MCF 10A (cell line): ENCODE measurements at regions of chr11 and their contacts with region 1.

Region 1: GRCh38 chr11:123246749-123247495 is 51.9 kb upstream of the CLMP start:
- DNase-seq: peak; percentile 85
- H3K4me3 Mint-ChIP-seq: no peak overlapping the region
- H3K27ac Mint-ChIP-seq: no peak overlapping the region
- H3K4me1 Mint-ChIP-seq: peaks cover 12% of the 10 kb centered on the region
- H3K27me3 Mint-ChIP-seq: no peaks in the 10 kb centered on the region
- CTCF ChIP-seq: peak; percentile 94

Region 2: GRCh38 chr11:123093739-123094138 is 153.2 kb before region 1 on chr11:
- CTCF ChIA-PET with region 1: interaction called, 487 read pairs
- POLR2A ChIA-PET with region 1: interaction called, 3 read pairs
- intact Hi-C with region 1: no loop called
- DNase-seq: no peak
- H3K4me3 Mint-ChIP-seq: no peak overlapping the region
- H3K27ac Mint-ChIP-seq: no peak overlapping the region
- H3K4me1 Mint-ChIP-seq: no peaks in the 10 kb centered on the region
- H3K27me3 Mint-ChIP-seq: no peaks in the 10 kb centered on the region
- CTCF ChIP-seq: no peak

Region 3: DNA sequence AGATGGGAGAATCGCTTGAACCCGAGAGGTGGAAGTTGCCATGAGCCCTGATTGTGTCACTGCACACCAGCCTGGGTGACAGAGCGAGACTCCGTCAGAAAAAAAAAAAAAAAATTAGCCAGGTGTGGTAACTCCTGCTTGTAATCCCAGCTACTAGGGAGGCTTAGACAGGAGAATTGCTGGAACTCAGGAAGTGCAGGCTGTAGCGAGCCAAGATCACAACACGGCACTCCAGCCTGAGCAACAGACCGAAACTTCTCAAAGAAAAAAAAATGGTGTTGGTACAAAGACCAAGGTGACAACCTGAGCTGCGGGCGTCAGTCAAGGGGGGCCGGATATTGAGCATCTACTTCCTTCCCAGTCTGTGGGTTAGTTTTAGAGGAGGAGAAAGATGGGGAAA is 136.6 kb before region 1 on chr11:
- CTCF ChIA-PET with region 1: interaction called, 487 read pairs
- POLR2A ChIA-PET with region 1: interaction called, 25 read pairs
- intact Hi-C with region 1: loop called (anchors 1 kb)
- DNase-seq: no peak
- H3K4me3 Mint-ChIP-seq: no peak overlapping the region
- H3K27ac Mint-ChIP-seq: no peak overlapping the region
- H3K4me1 Mint-ChIP-seq: peaks cover 5% of the 10 kb centered on the region
- H3K27me3 Mint-ChIP-seq: no peaks in the 10 kb centered on the region
- CTCF ChIP-seq: no peak

Region 4: GRCh38 chr11:123145220-123145619 is 101.7 kb before region 1 on chr11:
- CTCF ChIA-PET with region 1: interaction called, 12 read pairs
- POLR2A ChIA-PET with region 1: interaction called, 3 read pairs
- intact Hi-C with region 1: no loop called
- DNase-seq: peak; percentile 99
- H3K4me3 Mint-ChIP-seq: peak overlapping the region; percentile 57
- H3K27ac Mint-ChIP-seq: peak overlapping the region; percentile 72
- H3K4me1 Mint-ChIP-seq: peaks cover 27% of the 10 kb centered on the region
- H3K27me3 Mint-ChIP-seq: no peaks in the 10 kb centered on the region
- CTCF ChIP-seq: no peak

Region 5: GRCh38 chr11:123174196-123175183 is 72.4 kb before region 1 on chr11:
- CTCF ChIA-PET with region 1: interaction called, 28 read pairs
- POLR2A ChIA-PET with region 1: interaction called, 4 read pairs
- intact Hi-C with region 1: no loop called
- DNase-seq: peak; percentile 97
- H3K4me3 Mint-ChIP-seq: peak overlapping the region; percentile 11
- H3K27ac Mint-ChIP-seq: peak overlapping the region; percentile 90
- H3K4me1 Mint-ChIP-seq: peaks cover 48% of the 10 kb centered on the region
- H3K27me3 Mint-ChIP-seq: no peaks in the 10 kb centered on the region
- CTCF ChIP-seq: no peak

Region 6: DNA sequence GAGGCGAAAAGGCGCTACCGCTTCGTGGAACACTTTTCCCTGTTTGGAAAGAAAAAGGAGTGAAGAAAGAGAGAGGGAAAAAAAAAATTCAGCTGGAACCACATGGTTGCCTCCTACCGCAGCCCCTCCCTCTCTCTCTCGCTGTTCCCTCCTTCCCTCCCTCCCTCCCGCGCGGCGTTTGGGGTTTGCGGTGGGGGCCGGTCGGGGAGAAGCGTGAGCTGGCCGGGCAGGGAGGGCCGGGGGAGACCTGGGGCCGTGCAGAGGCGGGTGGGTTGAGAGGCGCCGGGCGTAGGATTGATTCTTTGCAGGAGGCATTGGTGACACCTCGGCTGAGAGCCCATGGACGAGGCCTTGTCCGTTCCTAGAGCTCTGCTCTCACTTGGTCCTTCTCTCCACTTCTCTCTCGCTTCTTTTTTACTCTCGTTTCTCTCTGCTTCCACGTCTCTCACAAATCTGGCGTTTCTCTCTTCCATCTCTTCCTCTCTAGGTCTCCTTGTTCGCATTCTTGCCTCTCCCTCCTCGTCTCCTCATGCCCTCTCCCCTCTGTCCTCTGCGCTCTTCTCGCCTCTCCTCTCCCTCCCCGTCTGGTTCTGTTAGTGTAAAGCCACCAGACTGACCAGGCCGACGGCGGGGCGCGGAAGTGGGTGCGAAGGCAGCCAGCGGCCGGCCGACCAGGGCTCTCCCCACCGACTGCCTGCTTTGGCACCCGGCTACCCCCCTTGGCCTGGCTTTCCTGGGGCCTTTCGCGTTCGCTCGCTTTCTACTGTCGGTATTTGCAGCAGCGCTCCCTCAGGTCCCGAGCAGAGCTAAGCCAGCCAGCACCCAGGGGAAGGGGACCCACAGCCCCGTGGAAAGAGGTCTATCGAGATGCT is 51.5 kb before region 1 on chr11 and contains the start of gene CLMP:
- CTCF ChIA-PET with region 1: interaction called, 16 read pairs
- POLR2A ChIA-PET with region 1: no interaction called
- intact Hi-C with region 1: loop called (anchors 2 kb)
- DNase-seq: peak; percentile 77
- H3K4me3 Mint-ChIP-seq: peak within 1 kb of the TSS; percentile 96
- H3K27ac Mint-ChIP-seq: peak within 1 kb of the TSS; percentile 93
- H3K4me1 Mint-ChIP-seq: peaks cover 53% of the 10 kb centered on the region
- H3K27me3 Mint-ChIP-seq: no peaks in the 10 kb centered on the region
- CTCF ChIP-seq: no peak
- total RNA-seq, gene CLMP: 86.1 and 91.9 TPM in 2 replicates

Region 7: GRCh38 chr11:123261345-123262106 is 14.6 kb after region 1 on chr11:
- CTCF ChIA-PET with region 1: interaction called, 65 read pairs
- POLR2A ChIA-PET with region 1: no interaction called
- intact Hi-C with region 1: no loop called
- DNase-seq: peak; percentile 80
- H3K4me3 Mint-ChIP-seq: peak overlapping the region; percentile 49
- H3K27ac Mint-ChIP-seq: no peak overlapping the region
- H3K4me1 Mint-ChIP-seq: no peaks in the 10 kb centered on the region
- H3K27me3 Mint-ChIP-seq: peaks cover 25% of the 10 kb centered on the region
- CTCF ChIP-seq: peak; percentile 90